Dendritic cell treated with granulocyte-macrophage colony-stimulating factor and Interleukin-4, amounts not matched to agents 40 ng/mL and 50 ng/mL, for 4 days (primary cell): ENCODE measurements at regions of chr19 and their contacts with region 1.

Region 1: GRCh38 chr19:46661020-46661731 is at the start of gene DACT3:
- H3K4me3 Mint-ChIP-seq: peak within 1 kb of the TSS; percentile 67
- H3K27ac Mint-ChIP-seq: peak within 1 kb of the TSS; percentile 57
- H3K4me1 Mint-ChIP-seq: peaks cover 34% of the 10 kb centered on the region
- H3K27me3 Mint-ChIP-seq: peaks cover 56% of the 10 kb centered on the region

Region 2: GRCh38 chr19:46614114-46614722 is 47.0 kb before region 1 on chr19:
- intact Hi-C with region 1: loop called (anchors 1 kb)
- H3K4me3 Mint-ChIP-seq: no peak overlapping the region
- H3K27ac Mint-ChIP-seq: no peak overlapping the region
- H3K4me1 Mint-ChIP-seq: peaks cover 62% of the 10 kb centered on the region
- H3K27me3 Mint-ChIP-seq: peaks cover 43% of the 10 kb centered on the region

Region 3: GRCh38 chr19:46634045-46634655 is 27.0 kb before region 1 on chr19:
- intact Hi-C with region 1: loop called (anchors 1 kb)
- H3K4me3 Mint-ChIP-seq: peak overlapping the region; percentile 55
- H3K27ac Mint-ChIP-seq: peak overlapping the region; percentile 20
- H3K4me1 Mint-ChIP-seq: peaks cover 55% of the 10 kb centered on the region
- H3K27me3 Mint-ChIP-seq: peaks cover 41% of the 10 kb centered on the region

Region 4: GRCh38 chr19:46644720-46645119 is 16.5 kb before region 1 on chr19:
- intact Hi-C with region 1: no loop called
- H3K4me3 Mint-ChIP-seq: no peak overlapping the region
- H3K27ac Mint-ChIP-seq: no peak overlapping the region
- H3K4me1 Mint-ChIP-seq: peaks cover 19% of the 10 kb centered on the region
- H3K27me3 Mint-ChIP-seq: peaks cover 67% of the 10 kb centered on the region